GM12878 (cell line): ENCODE measurements at regions of chr11 and their contacts with region 1.

Region 1: GRCh38 chr11:56353991-56354390 is at the start of gene OR8J1:
- DNase-seq: no peak
- ATAC-seq: no peak
- H3K4me3 ChIP-seq: no peak within 1 kb of the TSS
- H3K27ac ChIP-seq: no peak within 1 kb of the TSS
- H3K4me1 ChIP-seq: no peaks in the 10 kb centered on the region
- H3K27me3 ChIP-seq: no peaks in the 10 kb centered on the region
- CTCF ChIP-seq: no peak
- EP300 ChIP-seq: no peak
- POLR2A ChIP-seq: no peak
- RAD21 ChIP-seq: no peak
- polyA plus RNA-seq, gene OR8J1: not detected

Region 2: DNA sequence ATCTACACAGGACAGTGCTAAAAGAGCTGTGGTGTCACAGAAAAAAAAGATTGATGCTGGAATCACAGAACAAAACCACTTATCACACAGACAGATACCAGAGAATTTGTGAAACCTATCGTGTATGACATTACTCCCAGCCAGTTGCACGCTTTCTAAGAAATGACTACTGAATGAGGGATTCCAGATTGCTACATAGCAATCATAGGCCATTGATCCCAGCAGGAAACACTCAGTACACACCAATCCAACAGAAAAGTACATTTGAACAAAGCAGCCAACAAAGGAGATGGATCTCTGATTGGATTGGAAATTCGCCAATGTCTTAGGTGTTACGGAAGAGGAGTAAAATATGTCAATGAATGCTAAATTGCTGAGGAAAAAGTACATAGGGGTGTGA is 57.1 kb before region 1 on chr11:
- CTCF ChIA-PET with region 1: no interaction called
- POLR2A ChIA-PET with region 1: no interaction called
- RAD21 ChIA-PET with region 1: no interaction called
- SMC1A ChIA-PET with region 1: no interaction called
- in situ Hi-C with region 1: no loop called
- intact Hi-C with region 1: loop called (anchors 5 kb)
- DNase-seq: no peak
- ATAC-seq: no peak
- H3K4me3 ChIP-seq: no peak overlapping the region
- H3K27ac ChIP-seq: no peak overlapping the region
- H3K4me1 ChIP-seq: no peaks in the 10 kb centered on the region
- H3K27me3 ChIP-seq: no peaks in the 10 kb centered on the region
- CTCF ChIP-seq: no peak
- EP300 ChIP-seq: no peak
- POLR2A ChIP-seq: no peak
- RAD21 ChIP-seq: no peak